GM10248 (cell line): ENCODE measurements at regions of chr10 and their contacts with region 1.

Region 1: GRCh38 chr10:35195361-35196306 is 69.0 kb downstream of the CREM start:
- DNase-seq: peak; percentile 73
- CTCF ChIP-seq: peak; percentile 67

Region 2: GRCh38 chr10:35136263-35136815 is 59.3 kb before region 1 on chr10:
- CTCF ChIA-PET with region 1: interaction called, 147 read pairs
- POLR2A ChIA-PET with region 1: interaction called, 6 read pairs
- DNase-seq: peak; percentile 34
- CTCF ChIP-seq: no peak

Region 3: GRCh38 chr10:35165136-35165535 is 30.5 kb before region 1 on chr10:
- CTCF ChIA-PET with region 1: interaction called, 10 read pairs
- POLR2A ChIA-PET with region 1: interaction called, 6 read pairs
- DNase-seq: no peak
- CTCF ChIP-seq: no peak

Region 4: GRCh38 chr10:35184527-35185171 is 11.0 kb before region 1 on chr10:
- CTCF ChIA-PET with region 1: interaction called, 55 read pairs
- POLR2A ChIA-PET with region 1: interaction called, 4 read pairs
- DNase-seq: peak; percentile 50
- CTCF ChIP-seq: no peak

Region 5: GRCh38 chr10:35585903-35586535 is 390.4 kb after region 1 on chr10:
- CTCF ChIA-PET with region 1: no interaction called
- POLR2A ChIA-PET with region 1: no interaction called
- DNase-seq: no peak
- CTCF ChIP-seq: no peak